Mammary epithelial cell (primary cell): ENCODE measurements at regions of chr4 and their contacts with region 1.

Region 1: GRCh38 chr4:144174401-144175067 is 34.0 kb upstream of the GYPA start:
- DNase-seq: peak; percentile 50
- H3K4me3 ChIP-seq: no peak overlapping the region
- H3K27ac ChIP-seq: no peak overlapping the region
- H3K4me1 ChIP-seq: no peaks in the 10 kb centered on the region
- H3K27me3 ChIP-seq: peaks cover 2% of the 10 kb centered on the region
- CTCF ChIP-seq: peak; percentile 23 to 44

Region 2: GRCh38 chr4:144154044-144154443 is 20.5 kb before region 1 on chr4:
- CTCF ChIA-PET with region 1: no interaction called
- dilution Hi-C with region 1: no loop called
- in situ Hi-C with region 1: no loop called
- intact Hi-C with region 1: no loop called
- DNase-seq: no peak
- H3K4me3 ChIP-seq: no peak overlapping the region
- H3K27ac ChIP-seq: no peak overlapping the region
- H3K4me1 ChIP-seq: no peaks in the 10 kb centered on the region
- H3K27me3 ChIP-seq: no peaks in the 10 kb centered on the region
- CTCF ChIP-seq: no peak

Region 3: GRCh38 chr4:144575181-144575580 is 400.6 kb after region 1 on chr4:
- CTCF ChIA-PET with region 1: no interaction called
- dilution Hi-C with region 1: no loop called
- in situ Hi-C with region 1: no loop called
- intact Hi-C with region 1: loop called (anchors 1 kb)
- DNase-seq: no peak
- H3K4me3 ChIP-seq: no peak overlapping the region
- H3K27ac ChIP-seq: no peak overlapping the region
- H3K4me1 ChIP-seq: peaks cover 11% of the 10 kb centered on the region
- H3K27me3 ChIP-seq: no peaks in the 10 kb centered on the region
- CTCF ChIP-seq: peak; percentile 27 to 33

Region 4: DNA sequence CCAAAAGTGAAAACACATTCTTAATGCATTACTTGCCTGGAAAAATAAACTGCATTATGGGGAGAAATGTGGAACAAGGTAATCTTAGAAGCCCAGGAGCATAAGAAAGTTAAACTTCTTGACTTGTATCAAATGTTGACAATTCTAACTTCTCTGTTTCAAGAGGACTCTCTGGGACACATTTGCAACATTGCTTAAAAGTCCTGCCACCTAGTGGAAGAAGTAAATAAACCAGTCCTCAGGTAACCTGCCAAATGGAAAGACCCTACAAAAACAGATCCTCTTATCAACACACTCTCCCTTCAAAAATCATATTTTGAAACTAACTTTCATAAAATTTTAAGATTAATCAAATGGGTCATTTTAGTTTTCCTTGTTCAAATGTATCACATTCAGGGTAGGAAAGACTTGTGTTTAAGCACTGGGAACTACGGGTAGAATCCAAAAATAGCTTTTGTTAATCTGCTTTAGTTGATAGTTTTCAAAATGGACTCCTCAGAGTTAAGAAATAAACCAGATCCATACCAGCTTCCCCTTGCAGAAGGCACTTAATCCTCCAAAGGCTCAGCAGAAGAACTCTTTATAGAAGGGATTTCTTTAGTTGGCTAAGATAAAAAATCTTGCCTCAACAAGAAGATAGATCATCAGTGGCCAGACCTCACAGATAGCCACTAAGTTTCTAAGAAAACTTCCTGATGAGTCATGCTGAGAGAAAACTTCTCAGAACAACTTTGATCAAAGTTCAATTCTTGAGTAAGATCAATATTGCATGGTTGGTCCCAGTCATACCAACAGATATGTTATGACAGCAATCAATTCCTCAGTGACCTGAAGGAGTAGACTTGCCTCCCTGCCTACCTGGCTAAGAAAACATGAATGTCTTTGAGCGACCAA is 613.1 kb after region 1 on chr4:
- CTCF ChIA-PET with region 1: no interaction called
- dilution Hi-C with region 1: no loop called
- in situ Hi-C with region 1: loop called (anchors 10 to 25 kb)
- intact Hi-C with region 1: loop called (anchors 2 kb)
- DNase-seq: peak; percentile 27
- H3K4me3 ChIP-seq: no peak overlapping the region
- H3K27ac ChIP-seq: no peak overlapping the region
- H3K4me1 ChIP-seq: no peaks in the 10 kb centered on the region
- H3K27me3 ChIP-seq: no peaks in the 10 kb centered on the region
- CTCF ChIP-seq: peak; percentile 58 to 66

Region 5: GRCh38 chr4:145097821-145098674 is 923.5 kb after region 1 on chr4 and contains the starts of genes ABCE1 and ANAPC10:
- CTCF ChIA-PET with region 1: no interaction called
- dilution Hi-C with region 1: no loop called
- in situ Hi-C with region 1: no loop called
- intact Hi-C with region 1: loop called (anchors 2 kb)
- DNase-seq: peak; percentile 96
- H3K4me3 ChIP-seq: peak within 1 kb of the TSS; percentile 62 to 96 (median 89)
- H3K27ac ChIP-seq: peak within 1 kb of the TSS; percentile 92
- H3K4me1 ChIP-seq: peaks cover 19% of the 10 kb centered on the region
- H3K27me3 ChIP-seq: no peaks in the 10 kb centered on the region
- CTCF ChIP-seq: peak in 1 of 2 donors; percentile 14
- total RNA-seq, gene ABCE1: 96.3 to 132 TPM
- total RNA-seq, gene ANAPC10: 18.3 to 25.1 TPM